Activated naive CD8-positive, alpha-beta T cell treated with anti-CD3 and anti-CD28 coated beads, Interleukin-2, amount 10 ng/mL, durations not matched to agents 7 days and 5 days (primary cell): ENCODE measurements at regions of chr19 and their contacts with region 1.

Region 1: DNA sequence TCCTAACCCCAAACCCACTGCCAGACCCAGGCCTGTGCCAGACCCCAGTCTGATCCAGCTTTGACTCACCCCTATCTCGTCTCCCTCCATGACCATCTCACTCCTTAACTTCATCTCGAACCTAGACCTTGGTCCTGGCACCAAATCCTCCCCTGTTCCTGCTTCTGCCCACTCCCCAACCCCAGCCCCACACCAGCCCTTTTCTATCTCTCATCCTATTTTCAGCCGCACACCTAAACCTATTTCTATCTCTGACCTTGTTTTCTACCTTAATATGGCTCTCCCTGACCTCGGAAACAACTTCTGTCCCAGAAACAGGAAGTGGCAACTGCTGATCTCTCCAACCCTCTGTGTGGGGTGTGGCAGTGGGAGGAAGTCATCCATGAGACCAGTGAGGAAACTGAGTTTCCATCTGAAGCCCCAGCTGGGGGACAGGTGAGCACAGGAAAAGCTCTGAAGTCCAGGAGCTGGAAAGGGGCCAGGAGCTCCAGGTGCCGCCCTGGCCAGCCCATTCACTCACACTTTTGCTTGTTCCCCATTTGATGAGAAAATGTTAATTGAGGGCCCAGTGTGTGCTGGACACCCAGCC is 13.7 kb downstream of the PTH2 start:
- DNase-seq: no peak
- ATAC-seq: peak; percentile 73
- H3K4me3 Mint-ChIP-seq: peak overlapping the region; percentile 77
- H3K27ac Mint-ChIP-seq: peak overlapping the region; percentile 88
- H3K4me1 Mint-ChIP-seq: peaks cover 43% of the 10 kb centered on the region
- H3K27me3 Mint-ChIP-seq: peaks cover 4% of the 10 kb centered on the region

Region 2: GRCh38 chr19:49427855-49428546 is 18.5 kb after region 1 on chr19:
- POLR2A ChIA-PET with region 1: interaction called, 16 read pairs
- DNase-seq: peak; percentile 60
- ATAC-seq: peak; percentile 44
- H3K4me3 Mint-ChIP-seq: peak overlapping the region; percentile 56
- H3K27ac Mint-ChIP-seq: peak overlapping the region; percentile 51
- H3K4me1 Mint-ChIP-seq: peaks cover 47% of the 10 kb centered on the region
- H3K27me3 Mint-ChIP-seq: peaks cover 88% of the 10 kb centered on the region